Caco-2 (cell line): ENCODE measurements at regions of chr2 and their contacts with region 1.

Region 1: GRCh38 chr2:138042311-138042710 is 78.0 kb downstream of the HNMT start:
- DNase-seq: no peak
- H3K4me3 ChIP-seq: no peak overlapping the region
- H3K4me3 Mint-ChIP-seq: no peak overlapping the region
- H3K27ac Mint-ChIP-seq: no peak overlapping the region
- H3K4me1 ChIP-seq: peaks cover 2% of the 10 kb centered on the region; the same call in 1 of the 2 replicates
- H3K4me1 Mint-ChIP-seq: peaks cover 13% of the 10 kb centered on the region
- H3K27me3 ChIP-seq: no peaks in the 10 kb centered on the region
- H3K27me3 Mint-ChIP-seq: no peaks in the 10 kb centered on the region
- CTCF ChIP-seq: no peak

Region 2: GRCh38 chr2:137847443-137847842 is 194.9 kb before region 1 on chr2:
- CTCF ChIA-PET with region 1: no interaction called
- POLR2A ChIA-PET with region 1: no interaction called
- intact Hi-C with region 1: no loop called
- DNase-seq: peak in 1 of 2 experiments; percentile 39
- H3K4me3 ChIP-seq: no peak overlapping the region
- H3K4me3 Mint-ChIP-seq: no peak overlapping the region
- H3K27ac Mint-ChIP-seq: no peak overlapping the region
- H3K4me1 ChIP-seq: peaks cover 11% of the 10 kb centered on the region
- H3K4me1 Mint-ChIP-seq: peaks cover 4% of the 10 kb centered on the region
- H3K27me3 ChIP-seq: no peaks in the 10 kb centered on the region
- H3K27me3 Mint-ChIP-seq: no peaks in the 10 kb centered on the region
- CTCF ChIP-seq: no peak

Region 3: DNA sequence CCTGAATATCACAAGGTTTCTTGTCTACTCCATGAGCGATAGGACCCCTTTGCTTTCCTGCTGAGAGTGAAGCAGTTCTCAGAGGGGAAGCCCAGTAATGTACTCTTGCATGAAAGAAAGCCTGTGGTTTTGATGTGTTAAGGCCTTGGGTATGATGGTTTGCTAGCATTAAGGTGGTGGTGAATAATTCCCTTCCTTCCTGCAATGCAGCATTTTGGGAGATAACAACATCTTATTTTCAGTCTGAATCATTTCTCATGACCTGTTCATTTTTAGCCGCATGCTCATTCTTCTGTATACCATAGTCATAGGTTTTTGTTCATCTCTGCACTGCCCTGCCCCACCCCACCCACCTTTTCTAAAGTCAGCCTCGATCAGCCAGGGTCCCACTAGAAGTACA is 11.9 kb before region 1 on chr2:
- CTCF ChIA-PET with region 1: interaction called, 10 read pairs
- POLR2A ChIA-PET with region 1: no interaction called
- intact Hi-C with region 1: no loop called
- DNase-seq: no peak
- H3K4me3 ChIP-seq: no peak overlapping the region
- H3K4me3 Mint-ChIP-seq: no peak overlapping the region
- H3K27ac Mint-ChIP-seq: no peak overlapping the region
- H3K4me1 ChIP-seq: peaks cover 21% of the 10 kb centered on the region
- H3K4me1 Mint-ChIP-seq: peaks cover 23% of the 10 kb centered on the region
- H3K27me3 ChIP-seq: no peaks in the 10 kb centered on the region
- H3K27me3 Mint-ChIP-seq: no peaks in the 10 kb centered on the region
- CTCF ChIP-seq: no peak